OCI-LY7 (cell line): ENCODE measurements at regions of chr17 and their contacts with region 1.

Region 1: GRCh38 chr17:39621523-39622379 is 5.0 kb upstream of the PPP1R1B start:
- DNase-seq: peak; percentile 87
- H3K4me3 ChIP-seq: peak overlapping the region; percentile 36
- H3K27ac ChIP-seq: peak overlapping the region; percentile 53
- H3K4me1 ChIP-seq: peaks cover 37% of the 10 kb centered on the region
- CTCF ChIP-seq: peak; percentile 100

Region 2: DNA sequence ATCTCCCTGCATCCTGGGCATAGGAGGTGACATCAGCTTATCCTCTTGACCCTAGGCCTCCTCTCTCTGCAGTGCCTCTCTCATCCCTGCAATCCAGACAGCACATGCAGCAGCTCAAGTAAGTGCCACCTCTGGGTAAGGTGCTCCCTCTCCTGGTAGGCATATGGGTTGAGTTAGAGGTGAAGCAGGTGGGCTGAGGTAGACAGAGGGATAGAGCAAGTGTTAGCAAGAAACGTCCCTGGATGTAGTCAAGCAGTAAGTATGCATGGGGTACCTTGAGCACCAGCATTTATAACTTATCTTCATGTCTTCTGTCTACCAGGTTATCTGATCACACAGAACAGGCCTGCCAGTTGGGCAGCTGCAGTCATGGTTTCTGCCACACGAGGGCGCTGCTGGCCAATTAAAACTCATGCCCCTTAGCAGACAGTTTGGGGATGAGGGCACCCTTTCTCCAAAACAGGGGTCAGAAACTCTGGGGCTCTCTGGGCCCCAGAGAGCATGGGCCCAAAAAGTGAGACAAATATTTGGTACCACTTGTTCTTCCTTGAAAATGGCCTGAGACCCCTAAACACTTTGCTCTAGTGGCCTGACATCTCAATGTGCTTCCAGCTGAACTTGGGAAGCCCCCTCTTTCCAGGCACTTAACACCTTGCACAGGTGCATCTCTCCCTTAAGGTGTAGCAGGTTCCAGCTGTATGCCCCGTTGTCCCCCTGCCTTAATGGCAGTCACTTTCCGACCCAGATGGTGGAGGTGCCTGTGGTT is 73.9 kb before region 1 on chr17:
- CTCF ChIA-PET with region 1: interaction called, 3 read pairs
- POLR2A ChIA-PET with region 1: no interaction called
- intact Hi-C with region 1: loop called (anchors 1 kb)
- DNase-seq: peak; percentile 63
- H3K4me3 ChIP-seq: no peak overlapping the region
- H3K27ac ChIP-seq: no peak overlapping the region
- H3K4me1 ChIP-seq: peaks cover 8% of the 10 kb centered on the region
- CTCF ChIP-seq: peak; percentile 100

Region 3: DNA sequence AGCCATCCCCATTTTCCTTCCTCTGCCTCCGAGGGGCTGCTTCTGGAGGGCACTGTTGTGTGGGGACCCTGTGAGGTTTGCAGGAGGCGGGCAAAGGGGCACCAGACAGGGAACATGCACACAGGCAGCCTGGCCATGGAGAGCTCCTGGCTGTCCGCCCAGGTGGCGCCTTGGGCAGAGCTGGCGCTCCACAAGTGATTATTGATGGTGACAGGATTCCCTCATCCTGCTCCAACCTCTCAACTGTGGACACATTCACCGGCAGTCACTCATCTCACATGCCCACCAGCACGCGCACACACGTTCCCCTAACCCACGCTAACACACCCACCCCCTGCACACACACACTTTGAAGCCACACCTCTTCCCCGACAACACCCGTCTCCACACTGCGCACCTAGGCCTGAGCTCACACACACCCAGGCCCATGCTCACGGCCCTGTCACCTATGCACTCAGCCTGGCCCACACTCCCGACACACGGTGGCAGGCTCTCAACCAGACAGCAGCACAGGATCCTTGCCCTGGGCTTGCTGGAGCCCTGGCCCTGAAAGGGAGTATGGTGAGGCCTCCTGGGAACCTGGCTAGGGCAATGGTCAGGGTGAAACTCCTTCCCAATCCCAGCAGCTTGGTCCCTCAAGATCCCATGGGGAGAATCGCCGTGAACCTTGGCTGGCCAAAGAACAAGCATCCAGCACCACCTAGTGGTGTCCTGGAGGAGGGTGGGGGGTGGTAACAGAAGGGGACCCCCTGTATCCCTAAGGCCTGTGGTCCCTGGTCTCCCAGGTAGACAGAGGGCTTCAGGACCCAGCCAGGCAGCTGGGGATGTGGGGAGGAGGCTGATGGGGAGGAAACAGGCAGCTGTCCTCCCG is 50.1 kb after region 1 on chr17:
- CTCF ChIA-PET with region 1: no interaction called
- POLR2A ChIA-PET with region 1: no interaction called
- intact Hi-C with region 1: loop called (anchors 1 kb)
- DNase-seq: peak; percentile 52
- H3K4me3 ChIP-seq: no peak overlapping the region
- H3K27ac ChIP-seq: no peak overlapping the region
- H3K4me1 ChIP-seq: peaks cover 26% of the 10 kb centered on the region
- CTCF ChIP-seq: peak; percentile 88